ENCODE measurements at regions of chr6 and their contacts with region 1.

Region 1: DNA sequence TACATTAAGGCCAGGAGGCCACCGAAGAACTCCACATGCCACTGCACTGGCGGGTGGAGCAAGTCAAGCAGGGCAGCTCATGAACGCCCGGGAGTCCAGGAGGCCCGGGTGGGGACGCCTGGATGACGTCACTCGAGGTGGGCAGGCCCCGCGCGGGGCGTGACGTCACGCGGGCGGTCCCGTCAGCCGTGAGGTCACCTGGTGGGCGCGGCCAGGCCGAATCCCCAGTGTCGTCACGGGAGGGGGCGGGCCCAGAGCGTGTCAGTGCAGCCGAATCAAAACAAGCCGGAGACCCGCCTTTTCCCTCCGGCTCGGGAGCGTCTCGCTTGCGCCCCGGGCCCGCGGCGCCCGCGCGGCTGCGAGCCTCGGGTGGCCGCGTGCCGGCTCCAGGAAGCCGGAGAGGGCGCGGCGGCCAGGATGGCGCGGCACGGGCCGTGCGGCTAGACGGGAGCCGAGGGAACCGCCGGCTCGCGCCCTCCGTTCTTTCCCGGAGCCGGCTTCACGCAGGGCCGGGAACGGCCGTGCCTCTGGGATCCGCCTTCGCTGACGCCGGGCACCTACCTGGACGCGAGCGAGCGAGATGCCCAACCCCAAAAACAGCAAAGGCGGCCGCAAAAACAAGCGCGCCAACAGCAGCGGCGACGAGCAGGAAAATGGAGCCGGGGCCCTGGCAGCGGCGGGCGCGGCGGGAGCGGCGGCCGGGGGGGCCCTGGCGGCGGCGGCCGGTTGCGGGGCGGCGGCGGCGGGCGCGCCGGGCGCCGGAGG is at the start of gene HECA:
- DNase-seq: peak; percentile 99
- ATAC-seq: peak; percentile 77
- H3K4me3 Mint-ChIP-seq: peak within 1 kb of the TSS; percentile 92
- H3K27ac Mint-ChIP-seq: peak within 1 kb of the TSS; percentile 92
- H3K4me1 Mint-ChIP-seq: peaks cover 59% of the 10 kb centered on the region
- H3K27me3 Mint-ChIP-seq: no peaks in the 10 kb centered on the region
- CTCF ChIP-seq: no peak
- total RNA-seq, gene HECA: 45.4 to 47.1 TPM

Region 2: DNA sequence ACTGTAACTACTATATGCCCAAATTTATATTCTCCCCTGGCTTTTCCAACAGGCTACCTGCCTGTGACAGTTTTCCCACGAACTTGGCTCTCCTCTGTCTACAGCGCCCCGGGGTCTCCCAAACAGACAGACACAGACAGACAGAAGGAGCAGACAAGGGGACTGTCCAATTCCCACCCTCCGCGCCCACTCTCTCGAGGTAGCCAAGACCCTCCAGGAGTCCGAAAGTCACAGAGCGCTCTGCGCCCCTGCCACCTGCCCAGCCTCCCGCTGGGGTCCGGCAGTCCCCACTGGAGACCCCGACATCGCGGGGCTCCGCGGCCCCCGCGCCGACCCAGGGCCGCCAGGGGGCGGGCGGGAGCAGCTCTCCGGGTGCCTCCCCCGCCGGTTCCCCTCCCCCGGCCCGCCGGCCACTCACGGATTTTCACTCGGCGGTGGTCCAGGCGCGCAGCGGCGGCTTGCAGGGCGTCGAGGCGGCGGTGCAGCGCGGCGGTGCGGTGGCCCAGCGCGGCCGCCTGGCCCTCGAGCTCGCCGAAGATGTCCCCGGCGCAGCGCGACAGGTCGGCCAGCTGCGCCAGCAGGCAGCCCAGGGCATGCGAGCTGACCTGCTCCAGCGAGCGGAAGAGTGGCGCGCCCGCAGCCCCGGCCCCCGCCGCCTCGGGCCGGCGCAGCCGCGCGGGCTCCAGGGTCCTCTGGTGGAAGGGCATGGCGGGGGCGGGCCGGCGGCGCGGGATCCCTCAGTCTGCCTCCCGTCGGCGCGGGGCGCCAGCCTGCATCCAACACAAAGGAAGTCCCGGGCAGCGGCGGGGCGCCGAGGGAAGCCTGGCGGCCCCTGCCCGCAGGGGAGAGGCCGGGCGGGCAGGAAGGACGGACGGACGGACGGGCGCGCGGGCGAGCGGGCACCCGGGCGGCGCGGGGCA is 442.7 kb before region 1 on chr6:
- CTCF ChIA-PET with region 1: no interaction called
- POLR2A ChIA-PET with region 1: no interaction called
- intact Hi-C with region 1: no loop called
- DNase-seq: peak; percentile 61
- ATAC-seq: peak; percentile 77
- H3K4me3 Mint-ChIP-seq: peak overlapping the region; percentile 65
- H3K27ac Mint-ChIP-seq: no peak overlapping the region
- H3K4me1 Mint-ChIP-seq: peaks cover 3% of the 10 kb centered on the region
- H3K27me3 Mint-ChIP-seq: peaks cover 34% of the 10 kb centered on the region
- CTCF ChIP-seq: peak; percentile 95

Region 3: GRCh38 chr6:139146317-139146726 is 11.3 kb after region 1 on chr6:
- CTCF ChIA-PET with region 1: interaction called, 20 read pairs
- POLR2A ChIA-PET with region 1: interaction called, 89 read pairs
- intact Hi-C with region 1: no loop called
- DNase-seq: peak; percentile 55
- ATAC-seq: peak; percentile 69
- H3K4me3 Mint-ChIP-seq: peak overlapping the region; percentile 50
- H3K27ac Mint-ChIP-seq: peak overlapping the region; percentile 89
- H3K4me1 Mint-ChIP-seq: peaks cover 92% of the 10 kb centered on the region
- H3K27me3 Mint-ChIP-seq: no peaks in the 10 kb centered on the region
- CTCF ChIP-seq: no peak

Region 4: GRCh38 chr6:139153855-139154254 is 18.9 kb after region 1 on chr6:
- CTCF ChIA-PET with region 1: interaction called, 20 read pairs
- POLR2A ChIA-PET with region 1: interaction called, 89 read pairs
- intact Hi-C with region 1: loop called (anchors 2 kb)
- DNase-seq: no peak
- ATAC-seq: peak; percentile 45
- H3K4me3 Mint-ChIP-seq: no peak overlapping the region
- H3K27ac Mint-ChIP-seq: peak overlapping the region; percentile 95
- H3K4me1 Mint-ChIP-seq: peaks cover 79% of the 10 kb centered on the region
- H3K27me3 Mint-ChIP-seq: no peaks in the 10 kb centered on the region
- CTCF ChIP-seq: no peak

Region 5: GRCh38 chr6:139173172-139173571 is 38.2 kb after region 1 on chr6:
- CTCF ChIA-PET with region 1: interaction called, 10 read pairs
- POLR2A ChIA-PET with region 1: interaction called, 4 read pairs
- intact Hi-C with region 1: no loop called
- DNase-seq: peak; percentile 47
- ATAC-seq: peak; percentile 92
- H3K4me3 Mint-ChIP-seq: peak overlapping the region; percentile 31
- H3K27ac Mint-ChIP-seq: peak overlapping the region; percentile 89
- H3K4me1 Mint-ChIP-seq: peaks cover 87% of the 10 kb centered on the region
- H3K27me3 Mint-ChIP-seq: no peaks in the 10 kb centered on the region
- CTCF ChIP-seq: peak; percentile 42

Region 6: GRCh38 chr6:139369568-139370282 is 234.7 kb after region 1 on chr6:
- CTCF ChIA-PET with region 1: interaction called, 10 read pairs
- POLR2A ChIA-PET with region 1: interaction called, 10 read pairs
- intact Hi-C with region 1: no loop called
- DNase-seq: peak; percentile 22
- ATAC-seq: no peak
- H3K4me3 Mint-ChIP-seq: peak overlapping the region; percentile 27
- H3K27ac Mint-ChIP-seq: peak overlapping the region; percentile 79
- H3K4me1 Mint-ChIP-seq: peaks cover 38% of the 10 kb centered on the region
- H3K27me3 Mint-ChIP-seq: no peaks in the 10 kb centered on the region
- CTCF ChIP-seq: peak; percentile 76

Measured in activated CD8-positive, alpha-beta T cell treated with anti-CD3 and anti-CD28 coated beads for 36 hours (primary cell).